CD4-positive, alpha-beta memory T cell (primary cell): ENCODE measurements at regions of chr3 and their contacts with region 1.

Region 1: GRCh38 chr3:117597865-117598264 is 888.3 kb downstream of the TUSC7 start:
- DNase-seq: no peak
- H3K4me3 ChIP-seq: no peak overlapping the region
- H3K4me3 Mint-ChIP-seq: no peak overlapping the region
- H3K27ac ChIP-seq: no peak overlapping the region
- H3K27ac Mint-ChIP-seq: no peak overlapping the region
- H3K4me1 ChIP-seq: no peaks in the 10 kb centered on the region
- H3K4me1 Mint-ChIP-seq: no peaks in the 10 kb centered on the region
- H3K27me3 ChIP-seq: no peaks in the 10 kb centered on the region
- H3K27me3 Mint-ChIP-seq: no peaks in the 10 kb centered on the region

Region 2: DNA sequence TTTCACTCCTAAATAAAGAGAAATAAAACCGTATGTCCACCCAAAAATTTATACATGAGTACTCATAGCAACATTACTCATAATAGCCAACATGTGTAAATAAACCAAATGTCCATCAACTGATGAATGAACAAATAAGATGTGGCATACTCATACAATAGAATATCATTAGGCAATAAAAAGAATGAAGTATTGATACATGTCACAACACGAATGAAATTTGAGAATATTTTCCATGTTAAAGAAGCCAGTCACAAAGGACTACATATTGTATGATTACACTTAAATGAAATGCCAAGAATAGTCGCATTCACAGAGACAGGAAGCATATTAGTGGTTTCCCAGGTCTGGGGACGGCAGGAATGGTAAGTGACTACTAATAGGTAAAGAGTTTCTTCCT is 567.5 kb after region 1 on chr3:
- CTCF ChIA-PET with region 1: no interaction called
- POLR2A ChIA-PET with region 1: no interaction called
- intact Hi-C with region 1: loop called (anchors 5 kb)
- DNase-seq: no peak
- H3K4me3 ChIP-seq: no peak overlapping the region
- H3K4me3 Mint-ChIP-seq: no peak overlapping the region
- H3K27ac ChIP-seq: no peak overlapping the region
- H3K27ac Mint-ChIP-seq: no peak overlapping the region
- H3K4me1 ChIP-seq: no peaks in the 10 kb centered on the region
- H3K4me1 Mint-ChIP-seq: no peaks in the 10 kb centered on the region
- H3K27me3 ChIP-seq: no peaks in the 10 kb centered on the region
- H3K27me3 Mint-ChIP-seq: no peaks in the 10 kb centered on the region